ENCODE measurements at regions of chr14 and their contacts with region 1.

Region 1: DNA sequence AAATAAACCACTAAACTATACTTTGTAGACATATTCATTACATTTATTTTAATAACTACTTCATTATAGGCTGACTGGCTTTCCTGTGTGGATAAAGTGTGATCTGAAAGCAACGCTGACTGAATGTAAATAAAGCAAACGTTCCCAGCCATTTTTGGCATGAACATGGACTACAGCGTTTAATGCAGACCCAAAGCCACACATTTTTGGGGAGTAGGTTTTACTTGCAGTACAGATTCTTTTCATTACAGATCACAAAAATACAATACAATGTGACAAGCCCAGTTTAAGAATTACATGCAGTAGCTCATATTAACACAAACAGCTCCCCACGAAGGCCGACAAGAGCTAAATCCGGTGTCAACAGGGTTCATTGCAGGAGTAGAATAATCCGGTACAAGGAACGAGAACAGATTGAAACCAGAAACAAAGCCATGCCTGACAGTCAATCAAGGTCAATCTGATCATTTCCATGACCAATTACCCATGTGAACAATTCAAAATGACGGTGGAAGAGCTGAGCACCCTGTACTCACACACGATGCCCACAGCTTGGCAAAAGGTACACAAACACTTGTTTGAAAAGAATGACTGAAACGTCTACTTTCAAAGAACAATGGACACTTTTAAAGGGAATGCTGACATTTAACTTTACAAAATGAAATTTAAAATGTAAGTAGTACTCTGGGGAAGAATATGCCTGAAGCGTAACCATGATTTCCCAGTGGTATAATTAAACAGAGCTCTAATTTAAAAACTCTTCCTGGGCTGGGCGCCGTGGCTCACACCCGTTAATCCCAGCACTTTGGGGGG is 5.3 kb downstream of the BAG5 start:
- DNase-seq: no peak
- H3K4me3 ChIP-seq: no peak overlapping the region
- H3K27ac ChIP-seq: no peak overlapping the region
- H3K4me1 ChIP-seq: peaks cover 14% of the 10 kb centered on the region
- H3K27me3 ChIP-seq: no peaks in the 10 kb centered on the region
- CTCF ChIP-seq: no peak
- POLR2A ChIP-seq: no peak

Region 2: GRCh38 chr14:103546652-103547454 is 10.3 kb before region 1 on chr14:
- CTCF ChIA-PET with region 1: interaction called, 12 read pairs
- POLR2A ChIA-PET with region 1: no interaction called
- dilution Hi-C with region 1: no loop called
- intact Hi-C with region 1: no loop called
- DNase-seq: peak; percentile 40
- H3K4me3 ChIP-seq: no peak overlapping the region
- H3K27ac ChIP-seq: no peak overlapping the region
- H3K4me1 ChIP-seq: no peaks in the 10 kb centered on the region
- H3K27me3 ChIP-seq: no peaks in the 10 kb centered on the region
- CTCF ChIP-seq: peak; percentile 82 to 88
- POLR2A ChIP-seq: no peak